Psoas muscle (tissue), 8 donors: ENCODE measurements at regions of chr11 and their contacts with region 1.

Region 1: GRCh38 chr11:10514210-10514609 is 26.8 kb downstream of the RNF141 start:
- DNase-seq: no peak
- ATAC-seq: no peak
- H3K4me3 ChIP-seq: no peak overlapping the region
- H3K27ac ChIP-seq: no peak overlapping the region
- H3K4me1 ChIP-seq: peaks cover 9% of the 10 kb centered on the region
- H3K27me3 ChIP-seq: no peaks in the 10 kb centered on the region
- CTCF ChIP-seq: peak; percentile 31

Region 2: DNA sequence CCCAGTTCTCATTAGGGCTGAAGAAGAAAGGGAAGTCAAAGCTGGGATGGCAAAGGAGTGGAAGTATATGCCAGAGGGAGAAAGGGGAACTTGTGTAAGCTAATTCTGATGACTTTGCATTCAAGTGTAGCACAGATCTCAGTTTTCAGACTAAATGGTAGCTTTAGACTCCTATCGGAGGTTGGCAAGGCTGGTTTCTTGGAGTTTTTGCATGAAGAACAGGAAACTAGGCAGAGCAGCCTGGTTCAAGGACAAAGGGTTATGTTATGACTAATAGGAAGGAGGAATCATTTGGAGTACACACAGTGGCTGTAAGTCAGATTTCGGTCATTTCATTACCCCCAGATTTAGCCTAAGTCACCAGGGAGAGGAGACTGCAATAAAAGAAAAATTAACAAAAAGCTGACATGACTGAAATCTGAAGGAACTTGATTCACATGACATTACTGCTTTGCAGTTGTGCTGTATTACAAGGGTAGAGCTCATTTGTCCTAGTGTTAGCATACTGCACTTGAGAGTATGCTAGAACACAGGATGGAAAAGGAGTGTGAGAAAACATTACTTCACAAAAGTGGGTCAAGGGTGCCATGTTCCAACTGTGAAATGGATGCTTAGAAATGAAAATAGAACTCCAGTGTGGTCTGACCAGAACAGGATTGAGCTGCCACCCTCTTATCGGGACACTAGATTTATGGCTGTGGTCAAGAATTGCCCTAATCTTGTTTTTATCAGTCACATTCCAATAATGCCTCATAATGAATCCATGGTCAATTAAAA is 185.7 kb before region 1 on chr11:
- intact Hi-C with region 1: no loop called
- DNase-seq: no peak
- ATAC-seq: peak; percentile 29 to 58 (median 56)
- H3K4me3 ChIP-seq: no peak overlapping the region
- H3K27ac ChIP-seq: no peak overlapping the region
- H3K4me1 ChIP-seq: peaks cover 21% of the 10 kb centered on the region
- H3K27me3 ChIP-seq: no peaks in the 10 kb centered on the region
- CTCF ChIP-seq: no peak

Region 3: DNA sequence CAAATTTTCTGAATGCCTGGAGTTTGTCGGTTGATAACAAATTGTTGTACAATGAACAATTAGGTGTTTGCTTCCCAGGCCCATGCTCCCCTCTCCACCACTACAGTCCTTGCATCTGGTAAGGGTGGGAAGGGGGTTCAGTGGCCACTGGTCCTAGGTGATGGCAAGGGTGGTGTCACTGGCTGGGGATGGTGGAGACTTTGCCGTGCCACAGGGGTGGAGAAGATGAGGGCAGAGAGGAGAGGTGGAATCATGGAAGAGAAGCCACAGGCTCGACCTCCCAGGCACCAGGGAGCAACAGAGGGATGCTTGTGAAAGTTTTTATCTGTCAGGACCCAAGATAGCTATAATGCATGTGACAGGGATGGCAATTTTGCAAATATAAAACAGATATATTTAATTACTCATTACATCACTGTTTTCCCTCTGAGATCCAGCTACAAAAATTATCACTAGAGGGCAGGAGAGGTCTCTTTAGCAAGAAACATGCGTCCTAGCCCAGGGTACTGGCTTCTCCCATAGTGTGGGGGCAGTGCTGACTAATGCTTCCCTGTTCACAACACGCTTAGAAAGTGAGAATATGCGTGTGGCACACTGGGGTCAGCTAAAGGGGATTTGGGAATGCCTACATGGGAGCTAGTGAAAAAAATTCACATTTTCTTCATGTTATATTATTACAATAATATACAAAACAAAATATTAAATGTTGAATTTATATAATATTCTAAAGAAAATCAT is 108.2 kb before region 1 on chr11:
- intact Hi-C with region 1: loop called in 1 of 2 experiments (anchors 5 kb)
- DNase-seq: peak; percentile 53 to 70
- ATAC-seq: peak; percentile 79 to 84 (median 82)
- H3K4me3 ChIP-seq: no peak overlapping the region
- H3K27ac ChIP-seq: peak overlapping the region; percentile 69
- H3K4me1 ChIP-seq: peaks cover 30% of the 10 kb centered on the region
- H3K27me3 ChIP-seq: no peaks in the 10 kb centered on the region
- CTCF ChIP-seq: peak; percentile 78

Region 4: GRCh38 chr11:10455637-10456487 is 58.3 kb before region 1 on chr11:
- intact Hi-C with region 1: loop called in 1 of 2 experiments (anchors 10 kb)
- DNase-seq: peak; percentile 53 to 80
- ATAC-seq: peak; percentile 45 to 69 (median 58)
- H3K4me3 ChIP-seq: peak overlapping the region; percentile 75
- H3K27ac ChIP-seq: peak overlapping the region; percentile 96
- H3K4me1 ChIP-seq: peaks cover 38% of the 10 kb centered on the region
- H3K27me3 ChIP-seq: peaks cover 0 to 4% (median 0%) of the 10 kb centered on the region in 3 donors
- CTCF ChIP-seq: no peak

Region 5: GRCh38 chr11:10478574-10479550 is 35.3 kb before region 1 on chr11:
- intact Hi-C with region 1: no loop called
- DNase-seq: no peak
- ATAC-seq: peak in 1 of 4 donors; percentile 32
- H3K4me3 ChIP-seq: no peak overlapping the region
- H3K27ac ChIP-seq: no peak overlapping the region
- H3K4me1 ChIP-seq: peaks cover 15% of the 10 kb centered on the region
- H3K27me3 ChIP-seq: no peaks in the 10 kb centered on the region
- CTCF ChIP-seq: no peak